ENCODE measurements at regions of chr9 and their contacts with region 1.

Region 1: GRCh38 chr9:137295238-137295811 is 6.7 kb downstream of the NRARP start:
- DNase-seq: no peak
- ATAC-seq: peak; percentile 92
- H3K4me3 ChIP-seq: peak overlapping the region; percentile 39
- H3K27ac ChIP-seq: no peak overlapping the region
- H3K4me1 ChIP-seq: no peaks in the 10 kb centered on the region
- H3K27me3 ChIP-seq: peaks cover 33% of the 10 kb centered on the region
- CTCF ChIP-seq: peak; percentile 71
- POLR2A ChIP-seq: no peak
- RAD21 ChIP-seq: peak; percentile 62

Region 2: DNA sequence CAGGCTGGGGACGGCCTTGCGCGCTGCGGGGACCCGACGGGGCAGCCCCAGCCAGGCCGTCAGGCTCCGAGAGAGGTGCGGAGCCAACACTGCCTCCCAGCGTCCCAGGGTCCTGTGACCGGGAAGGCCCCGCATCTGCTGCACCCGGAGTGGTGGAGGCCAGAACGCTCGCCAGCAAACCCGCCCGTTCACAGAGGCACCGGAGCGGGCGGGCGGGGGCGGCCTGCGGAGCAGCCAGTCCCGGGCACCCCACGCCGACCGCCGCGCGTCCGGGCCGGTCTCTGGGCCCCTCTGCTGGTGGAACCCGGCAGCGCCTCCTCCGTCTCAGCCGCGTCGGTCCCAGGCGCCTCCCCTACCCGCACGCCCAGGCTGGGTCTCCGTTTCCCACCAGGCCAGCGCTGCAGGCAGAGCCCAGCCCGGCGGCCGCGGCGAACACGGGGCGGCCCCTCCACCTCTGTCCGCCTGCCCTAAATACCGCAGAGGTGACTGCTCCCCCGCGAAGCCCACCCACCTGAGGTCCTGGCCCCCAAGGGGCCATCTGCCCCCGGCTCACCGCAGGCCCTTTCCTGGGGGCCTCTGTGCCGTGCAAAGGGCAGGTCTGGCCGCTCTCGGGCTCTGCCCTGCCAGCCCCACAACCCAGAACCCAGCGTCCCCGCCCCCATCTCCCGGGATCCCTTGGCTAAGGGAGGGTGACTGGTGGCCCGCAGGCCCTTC is 111.7 kb after region 1 on chr9:
- CTCF ChIA-PET with region 1: interaction called, 5 read pairs
- POLR2A ChIA-PET with region 1: no interaction called
- dilution Hi-C with region 1: no loop called
- in situ Hi-C with region 1: loop called (anchors 5 kb)
- intact Hi-C with region 1: loop called (anchors 2 kb)
- DNase-seq: peak; percentile 44
- ATAC-seq: peak; percentile 94
- H3K4me3 ChIP-seq: peak overlapping the region; percentile 31
- H3K27ac ChIP-seq: no peak overlapping the region
- H3K4me1 ChIP-seq: peaks cover 20% of the 10 kb centered on the region
- H3K27me3 ChIP-seq: no peaks in the 10 kb centered on the region
- CTCF ChIP-seq: peak; percentile 84
- POLR2A ChIP-seq: no peak
- RAD21 ChIP-seq: peak; percentile 83

Region 3: DNA sequence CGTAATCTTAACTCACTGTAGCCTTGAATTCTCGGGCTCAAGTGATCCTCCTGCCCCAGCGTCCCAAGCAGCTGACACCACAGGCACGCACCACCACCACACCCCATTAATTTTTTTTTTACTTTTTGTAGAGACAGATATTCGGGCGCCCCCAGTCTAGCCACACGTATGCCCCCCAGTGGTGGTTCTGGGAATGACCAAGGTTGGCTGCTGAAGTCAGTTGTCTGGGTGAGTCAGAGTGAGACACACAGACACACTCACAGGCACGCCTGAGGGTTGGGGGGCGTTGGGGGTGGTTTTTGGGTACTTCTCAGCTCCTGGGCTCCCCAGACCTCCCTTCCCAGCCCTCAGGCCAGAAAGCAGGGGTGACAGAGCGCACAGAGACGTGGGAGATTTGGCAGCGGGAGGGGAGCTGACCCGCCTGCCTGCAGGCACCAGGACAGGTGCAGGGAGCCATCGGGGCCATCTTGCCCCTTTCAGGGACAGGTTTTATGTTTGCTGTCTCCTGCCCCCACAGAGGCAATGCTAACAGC is 150.0 kb after region 1 on chr9:
- CTCF ChIA-PET with region 1: no interaction called
- POLR2A ChIA-PET with region 1: no interaction called
- dilution Hi-C with region 1: no loop called
- in situ Hi-C with region 1: no loop called
- intact Hi-C with region 1: loop called (anchors 2 kb)
- DNase-seq: peak; percentile 76
- ATAC-seq: peak; percentile 94
- H3K4me3 ChIP-seq: no peak overlapping the region
- H3K27ac ChIP-seq: no peak overlapping the region
- H3K4me1 ChIP-seq: peaks cover 2% of the 10 kb centered on the region; the same call in 1 of the 2 replicates
- H3K27me3 ChIP-seq: peaks cover 3% of the 10 kb centered on the region; the same call in 1 of the 2 replicates
- CTCF ChIP-seq: peak; percentile 86
- POLR2A ChIP-seq: no peak
- RAD21 ChIP-seq: peak; percentile 71

Region 4: DNA sequence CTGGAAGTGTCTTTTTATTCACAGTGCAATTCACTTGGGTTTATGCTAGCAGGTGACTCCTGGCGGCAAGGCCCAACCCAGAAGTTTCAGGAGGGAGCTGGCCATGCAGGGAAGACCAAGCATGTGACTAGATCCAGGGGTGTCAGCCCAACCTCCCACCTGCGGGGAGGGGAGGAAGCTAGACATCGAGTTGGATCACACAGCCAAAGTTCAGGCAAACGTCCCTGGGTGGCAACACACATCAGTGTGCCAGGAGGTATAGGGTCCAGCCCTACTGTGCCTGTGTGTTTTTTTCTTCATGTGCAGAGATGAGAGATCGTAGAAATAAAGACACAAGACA is 229.6 kb after region 1 on chr9:
- CTCF ChIA-PET with region 1: no interaction called
- POLR2A ChIA-PET with region 1: no interaction called
- dilution Hi-C with region 1: no loop called
- in situ Hi-C with region 1: loop called (anchors 5 kb)
- intact Hi-C with region 1: loop called (anchors 5 kb)
- DNase-seq: no peak
- ATAC-seq: no peak
- H3K4me3 ChIP-seq: no peak overlapping the region
- H3K27ac ChIP-seq: no peak overlapping the region
- H3K4me1 ChIP-seq: no peaks in the 10 kb centered on the region
- H3K27me3 ChIP-seq: peaks cover 3% of the 10 kb centered on the region; the same call in 1 of the 2 replicates
- CTCF ChIP-seq: no peak
- POLR2A ChIP-seq: no peak
- RAD21 ChIP-seq: no peak